Breast epithelium (tissue), 4 donors: ENCODE measurements at regions of chr22 and their contacts with region 1.

Region 1: GRCh38 chr22:32661737-32662586 is 139.5 kb upstream of the TIMP3 start:
- DNase-seq: no peak
- H3K4me3 ChIP-seq: no peak overlapping the region
- H3K27ac ChIP-seq: peak overlapping the region; percentile 41 to 72
- H3K4me1 ChIP-seq: no peaks in the 10 kb centered on the region
- H3K27me3 ChIP-seq: no peaks in the 10 kb centered on the region
- CTCF ChIP-seq: no peak
- POLR2A ChIP-seq: no peak

Region 2: GRCh38 chr22:32378707-32379272 is 283.2 kb before region 1 on chr22:
- intact Hi-C with region 1: no loop called
- DNase-seq: no peak
- H3K4me3 ChIP-seq: no peak overlapping the region
- H3K27ac ChIP-seq: no peak overlapping the region
- H3K4me1 ChIP-seq: no peaks in the 10 kb centered on the region
- H3K27me3 ChIP-seq: no peaks in the 10 kb centered on the region
- CTCF ChIP-seq: peak in 1 of 3 donors; percentile 38
- POLR2A ChIP-seq: no peak

Region 3: DNA sequence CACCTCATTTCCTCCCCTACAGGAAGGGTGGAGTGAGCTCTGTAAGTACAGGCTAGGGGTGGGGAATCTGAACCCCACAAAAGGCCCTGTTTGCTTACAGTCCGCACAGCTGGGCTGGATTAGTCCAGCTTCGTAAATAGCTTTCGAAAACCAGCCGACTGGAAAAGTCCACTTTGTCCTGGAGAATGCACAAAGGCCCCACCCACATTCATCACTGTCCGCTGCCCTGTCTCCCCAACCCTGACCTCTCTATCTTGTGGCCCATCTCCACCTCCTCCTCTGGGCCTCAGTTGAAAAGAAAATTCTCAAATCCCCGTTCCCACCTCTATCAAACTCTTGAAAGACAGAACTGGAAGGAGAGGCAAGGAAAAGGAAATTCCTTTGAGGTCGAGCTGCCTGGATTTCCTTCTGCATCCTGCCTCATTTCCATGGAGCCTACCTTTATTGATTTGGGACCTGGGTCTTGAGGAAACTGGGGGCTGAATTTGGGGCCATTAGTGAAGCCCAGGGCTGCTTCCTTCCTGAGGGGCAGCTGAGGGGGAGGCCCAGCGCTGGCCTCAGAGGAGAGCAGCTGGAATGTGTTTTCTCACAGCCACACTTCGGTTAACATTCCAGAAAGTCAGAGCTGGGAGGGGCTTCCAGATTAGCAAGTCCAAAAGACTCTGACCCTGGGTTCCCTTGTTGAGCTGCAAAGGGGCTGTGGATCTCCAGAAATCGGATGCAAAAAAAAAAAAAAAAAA is 39.8 kb before region 1 on chr22:
- intact Hi-C with region 1: no loop called
- DNase-seq: peak in 1 of 2 donors; percentile 51
- H3K4me3 ChIP-seq: peak overlapping the region in 1 of 3 donors; percentile 22
- H3K27ac ChIP-seq: peak overlapping the region; percentile 84 to 95
- H3K4me1 ChIP-seq: peaks cover 13 to 33% of the 10 kb centered on the region in 2 donors
- H3K27me3 ChIP-seq: no peaks in the 10 kb centered on the region
- CTCF ChIP-seq: no peak
- POLR2A ChIP-seq: no peak

Region 4: GRCh38 chr22:32700191-32700882 is 38.4 kb after region 1 on chr22:
- intact Hi-C with region 1: no loop called
- DNase-seq: no peak
- H3K4me3 ChIP-seq: no peak overlapping the region
- H3K27ac ChIP-seq: peak overlapping the region; percentile 18 to 82
- H3K4me1 ChIP-seq: peaks cover 0 to 4% of the 10 kb centered on the region in 2 donors
- H3K27me3 ChIP-seq: no peaks in the 10 kb centered on the region
- CTCF ChIP-seq: no peak
- POLR2A ChIP-seq: no peak

Region 5: GRCh38 chr22:32712644-32713355 is 50.8 kb after region 1 on chr22:
- intact Hi-C with region 1: loop called (anchors 2 kb)
- DNase-seq: no peak
- H3K4me3 ChIP-seq: no peak overlapping the region
- H3K27ac ChIP-seq: no peak overlapping the region
- H3K4me1 ChIP-seq: peaks cover 0 to 5% of the 10 kb centered on the region in 2 donors
- H3K27me3 ChIP-seq: no peaks in the 10 kb centered on the region
- CTCF ChIP-seq: no peak
- POLR2A ChIP-seq: no peak

Region 6: GRCh38 chr22:32737811-32738497 is 76.0 kb after region 1 on chr22:
- intact Hi-C with region 1: no loop called
- DNase-seq: no peak
- H3K4me3 ChIP-seq: no peak overlapping the region
- H3K27ac ChIP-seq: no peak overlapping the region
- H3K4me1 ChIP-seq: no peaks in the 10 kb centered on the region
- H3K27me3 ChIP-seq: no peaks in the 10 kb centered on the region
- CTCF ChIP-seq: no peak
- POLR2A ChIP-seq: no peak